AG04449 (cell line): ENCODE measurements at regions of chr4 and their contacts with region 1.

Region 1: DNA sequence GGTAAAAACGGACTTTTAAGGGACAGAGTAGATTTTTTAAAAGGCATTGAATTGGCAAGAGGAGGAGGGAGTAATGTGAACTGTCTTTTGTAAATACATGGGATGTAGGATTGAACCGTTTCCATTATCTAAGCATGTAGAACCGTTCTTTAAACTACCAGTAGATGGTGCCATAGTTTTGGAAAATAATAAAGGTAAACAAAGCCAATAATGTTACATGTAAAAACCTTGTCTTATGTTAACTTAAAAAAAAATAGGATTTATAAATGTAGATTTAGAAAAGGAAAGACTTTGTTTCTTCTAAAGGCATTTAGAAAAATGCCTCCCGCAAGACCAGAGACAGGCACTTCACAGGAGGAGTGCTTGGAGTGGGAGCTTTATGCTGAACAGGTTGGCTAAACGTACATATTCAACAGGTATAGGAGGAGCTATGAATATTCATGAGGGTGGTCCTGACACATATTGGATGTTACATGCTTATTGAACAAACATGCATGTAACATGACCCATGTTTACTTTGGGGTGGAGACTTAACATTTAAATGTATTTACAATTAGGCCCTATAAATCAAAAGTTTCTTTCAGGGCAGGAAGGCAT is 45.5 kb upstream of the FAM241A start:
- DNase-seq: no peak
- H3K4me3 ChIP-seq: no peak overlapping the region
- CTCF ChIP-seq: peak; percentile 40

Region 2: DNA sequence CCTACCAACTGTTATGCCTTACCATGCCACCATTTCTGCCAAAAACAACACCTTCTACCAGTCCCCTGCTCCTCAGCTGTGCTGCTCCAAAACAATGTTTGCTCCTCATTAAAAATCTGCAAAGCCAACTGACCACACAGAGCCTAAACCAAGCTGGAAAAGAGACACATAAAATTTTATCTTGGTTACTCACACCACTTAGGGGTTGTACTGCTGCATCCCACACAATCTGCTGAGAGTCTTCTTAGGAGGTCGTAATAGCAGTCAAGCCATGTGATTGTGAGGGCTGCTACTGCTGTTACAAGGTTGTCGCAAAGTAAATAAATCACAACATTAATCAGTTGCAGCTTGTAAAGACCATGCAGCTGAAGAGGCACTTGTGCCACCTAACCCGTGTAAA is 561.9 kb before region 1 on chr4:
- CTCF ChIA-PET with region 1: no interaction called
- POLR2A ChIA-PET with region 1: no interaction called
- DNase-seq: peak; percentile 69
- H3K4me3 ChIP-seq: no peak overlapping the region
- CTCF ChIP-seq: no peak

Region 3: GRCh38 chr4:112231779-112232713 is 132.2 kb after region 1 on chr4 and contains the start of gene AP1AR:
- CTCF ChIA-PET with region 1: interaction called, 373 read pairs
- POLR2A ChIA-PET with region 1: no interaction called
- DNase-seq: no peak
- H3K4me3 ChIP-seq: peak within 1 kb of the TSS; percentile 87
- CTCF ChIP-seq: peak; percentile 51

Region 4: DNA sequence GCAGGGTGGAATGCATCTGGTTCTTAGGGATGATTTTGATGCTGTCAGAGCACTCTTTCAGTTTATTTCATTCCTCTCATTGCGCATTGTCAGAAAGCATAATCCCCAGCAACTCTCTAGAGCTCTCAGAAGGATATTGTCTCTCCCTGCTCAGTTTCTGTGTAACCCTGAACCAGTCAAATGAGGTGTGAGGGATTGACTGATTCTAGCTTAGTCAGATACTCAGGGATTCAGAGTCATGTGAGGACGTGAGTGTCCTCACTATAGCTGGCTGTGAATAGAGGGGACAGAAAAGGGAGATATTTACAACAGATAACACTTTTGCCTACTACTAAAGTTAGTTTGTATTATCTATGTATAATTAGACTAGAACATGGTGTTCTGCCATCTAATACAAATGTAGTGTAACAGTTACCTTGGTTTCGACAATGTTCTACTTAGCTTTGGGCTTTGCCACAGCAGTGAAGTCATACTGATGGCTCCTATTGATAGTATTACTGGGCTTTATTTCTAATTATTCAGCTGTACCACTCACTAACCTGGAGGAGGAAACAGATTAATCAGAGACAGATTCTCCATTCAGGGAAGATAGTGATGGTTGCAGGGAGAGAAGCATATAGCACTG is 151.3 kb after region 1 on chr4:
- CTCF ChIA-PET with region 1: interaction called, 13 read pairs
- POLR2A ChIA-PET with region 1: no interaction called
- DNase-seq: no peak
- H3K4me3 ChIP-seq: no peak overlapping the region
- CTCF ChIP-seq: no peak

Region 5: GRCh38 chr4:112266821-112267220 is 167.0 kb after region 1 on chr4:
- CTCF ChIA-PET with region 1: interaction called, 42 read pairs
- POLR2A ChIA-PET with region 1: no interaction called
- DNase-seq: no peak
- H3K4me3 ChIP-seq: no peak overlapping the region
- CTCF ChIP-seq: no peak